Calu3 (cell line): ENCODE measurements at regions of chr19 and their contacts with region 1.

Region 1: GRCh38 chr19:50724522-50725217 is 1.5 kb downstream of the CLEC11A start:
- DNase-seq: peak; percentile 100
- H3K4me3 Mint-ChIP-seq: peak overlapping the region; percentile 94
- H3K27ac Mint-ChIP-seq: peak overlapping the region; percentile 78
- H3K4me1 Mint-ChIP-seq: no peaks in the 10 kb centered on the region
- H3K27me3 Mint-ChIP-seq: peaks cover 63% of the 10 kb centered on the region
- CTCF ChIP-seq: peak; percentile 88

Region 2: DNA sequence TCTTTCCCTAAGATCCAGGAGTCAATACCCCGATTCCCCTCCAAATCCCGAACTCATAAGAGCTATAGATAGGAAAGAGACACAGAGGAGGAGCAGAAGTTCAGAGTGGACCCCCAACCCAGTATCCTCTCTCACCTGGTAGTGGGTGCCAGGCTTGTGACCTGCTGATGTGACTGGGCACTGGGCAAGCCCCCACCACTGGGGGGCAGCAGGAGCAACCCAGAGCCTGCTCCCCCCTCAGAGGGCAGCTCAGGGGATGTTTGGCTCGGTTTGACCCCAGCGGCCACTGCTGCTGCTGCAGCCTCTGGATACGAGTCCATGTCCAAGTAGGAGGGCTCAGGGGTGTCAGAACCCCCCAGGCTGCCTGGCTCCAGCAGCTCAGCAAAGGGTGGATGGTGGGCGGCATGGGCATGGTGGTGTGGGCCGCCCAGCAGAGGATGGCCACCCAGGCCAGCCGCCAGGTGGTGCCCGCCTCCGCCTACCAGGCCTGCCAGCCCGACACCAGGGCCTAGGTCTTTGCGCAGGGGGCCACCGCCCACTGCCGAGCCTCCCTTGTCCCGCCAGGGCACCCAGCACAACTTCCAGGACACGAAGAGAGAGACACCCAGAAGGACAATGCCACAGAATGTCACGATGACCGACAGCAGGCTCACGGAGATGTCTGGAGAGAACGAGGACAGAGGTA is 92.4 kb before region 1 on chr19:
- CTCF ChIA-PET with region 1: no interaction called
- intact Hi-C with region 1: no loop called
- DNase-seq: no peak
- H3K4me3 Mint-ChIP-seq: no peak overlapping the region
- H3K27ac Mint-ChIP-seq: no peak overlapping the region
- H3K4me1 Mint-ChIP-seq: no peaks in the 10 kb centered on the region
- H3K27me3 Mint-ChIP-seq: peaks cover 47% of the 10 kb centered on the region
- CTCF ChIP-seq: no peak

Region 3: DNA sequence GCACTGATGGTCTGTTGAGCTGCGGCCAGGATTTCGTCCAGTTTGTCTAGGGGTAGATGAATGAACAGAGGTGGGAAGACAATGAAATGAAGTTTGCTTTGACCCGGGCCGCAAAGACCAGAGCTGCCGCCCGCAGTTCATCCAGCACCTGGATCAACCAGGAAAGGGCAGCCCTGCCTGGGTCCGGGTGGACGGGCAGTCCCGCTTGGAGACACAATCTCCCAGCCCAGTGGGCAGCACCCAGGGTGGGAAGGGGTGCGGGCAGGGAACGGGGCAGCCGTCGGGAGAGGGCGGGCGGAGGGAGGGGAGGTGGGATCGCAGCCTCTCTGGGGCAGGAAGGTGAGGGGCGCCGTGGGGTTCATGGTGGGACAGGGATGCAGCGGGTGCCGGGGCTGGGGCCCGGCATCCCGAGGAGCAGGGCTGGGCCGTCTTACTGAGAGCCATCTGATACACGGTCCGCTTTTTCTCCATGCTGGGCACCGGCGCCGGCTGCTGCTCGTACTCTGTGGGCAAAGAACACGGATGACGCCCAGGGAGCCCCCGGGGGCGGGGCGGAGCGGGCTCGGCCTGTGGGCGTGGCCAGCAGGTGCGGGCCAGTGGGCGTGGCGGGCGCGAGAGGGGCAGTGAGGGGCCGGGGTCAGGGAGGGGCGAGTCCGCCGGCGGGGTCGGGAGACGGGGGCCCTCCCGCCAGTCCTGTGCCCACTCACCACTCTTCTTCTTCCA is 38.2 kb before region 1 on chr19:
- CTCF ChIA-PET with region 1: no interaction called
- intact Hi-C with region 1: no loop called
- DNase-seq: no peak
- H3K4me3 Mint-ChIP-seq: no peak overlapping the region
- H3K27ac Mint-ChIP-seq: no peak overlapping the region
- H3K4me1 Mint-ChIP-seq: no peaks in the 10 kb centered on the region
- H3K27me3 Mint-ChIP-seq: peaks cover 100% of the 10 kb centered on the region
- CTCF ChIP-seq: no peak

Region 4: DNA sequence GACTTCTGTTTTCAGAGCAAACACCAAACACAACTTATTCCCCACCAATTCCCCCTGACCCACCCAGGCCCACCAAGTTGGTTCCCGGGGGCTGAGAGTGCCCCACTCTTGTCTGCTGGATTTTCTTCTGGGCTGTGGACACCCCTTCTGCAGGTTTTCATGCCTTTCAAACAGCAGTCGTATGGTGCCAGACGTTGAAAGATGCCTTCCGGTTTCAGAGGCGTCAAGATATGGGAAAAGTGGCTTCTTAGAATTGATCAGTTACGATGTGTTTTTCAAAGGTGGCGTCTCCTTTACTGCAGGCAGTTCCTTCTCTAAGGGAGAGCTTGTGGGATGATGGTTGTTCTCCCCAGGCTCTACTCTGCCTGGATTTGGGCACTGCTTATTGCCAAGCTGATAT is 11.2 kb after region 1 on chr19:
- CTCF ChIA-PET with region 1: interaction called, 10 read pairs
- intact Hi-C with region 1: no loop called
- DNase-seq: no peak
- H3K4me3 Mint-ChIP-seq: no peak overlapping the region
- H3K27ac Mint-ChIP-seq: no peak overlapping the region
- H3K4me1 Mint-ChIP-seq: no peaks in the 10 kb centered on the region
- H3K27me3 Mint-ChIP-seq: peaks cover 87% of the 10 kb centered on the region
- CTCF ChIP-seq: no peak

Region 5: GRCh38 chr19:50764409-50764808 is 39.7 kb after region 1 on chr19:
- CTCF ChIA-PET with region 1: no interaction called
- intact Hi-C with region 1: no loop called
- DNase-seq: no peak
- H3K4me3 Mint-ChIP-seq: no peak overlapping the region
- H3K27ac Mint-ChIP-seq: no peak overlapping the region
- H3K4me1 Mint-ChIP-seq: peaks cover 9% of the 10 kb centered on the region
- H3K27me3 Mint-ChIP-seq: peaks cover 47% of the 10 kb centered on the region
- CTCF ChIP-seq: no peak

Region 6: DNA sequence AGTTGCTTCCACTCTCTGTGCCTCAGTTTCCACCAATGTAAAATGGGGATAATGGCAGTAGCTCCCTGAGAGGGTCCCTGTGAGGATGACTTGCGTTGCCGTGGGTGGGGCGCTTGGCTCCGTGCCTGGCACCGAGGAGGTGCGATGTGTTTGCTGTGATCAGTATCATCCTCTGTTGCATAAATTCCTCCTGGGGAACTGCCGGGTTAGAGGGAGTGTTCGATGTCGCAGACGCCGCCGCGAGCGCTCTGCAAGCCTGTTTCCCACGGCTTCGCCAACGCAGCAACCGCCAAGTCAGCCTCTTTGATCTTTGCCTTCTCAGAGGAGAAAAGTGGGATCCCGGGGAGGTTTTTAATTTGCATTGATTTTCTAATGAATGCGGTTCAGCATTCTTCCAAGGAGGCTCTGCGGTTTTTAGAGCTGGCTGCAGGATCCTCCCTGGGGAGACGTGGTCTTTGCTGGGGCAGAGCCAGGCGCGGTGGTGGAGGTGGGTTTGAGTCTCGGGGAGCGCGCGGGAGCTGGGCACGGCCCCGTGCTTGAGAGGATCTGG is 53.2 kb after region 1 on chr19:
- CTCF ChIA-PET with region 1: interaction called, 10 read pairs
- intact Hi-C with region 1: no loop called
- DNase-seq: no peak
- H3K4me3 Mint-ChIP-seq: no peak overlapping the region
- H3K27ac Mint-ChIP-seq: no peak overlapping the region
- H3K4me1 Mint-ChIP-seq: peaks cover 19% of the 10 kb centered on the region
- H3K27me3 Mint-ChIP-seq: peaks cover 99% of the 10 kb centered on the region
- CTCF ChIP-seq: no peak